ENCODE measurements at regions of chr9 and their contacts with region 1.

Region 1: GRCh38 chr9:79817438-79818004 is 245.8 kb downstream of the TLE4 start:
- DNase-seq: peak; percentile 22
- H3K4me3 Mint-ChIP-seq: no peak overlapping the region
- H3K27ac Mint-ChIP-seq: no peak overlapping the region
- H3K4me1 Mint-ChIP-seq: peaks cover 43% of the 10 kb centered on the region
- H3K27me3 Mint-ChIP-seq: no peaks in the 10 kb centered on the region

Region 2: DNA sequence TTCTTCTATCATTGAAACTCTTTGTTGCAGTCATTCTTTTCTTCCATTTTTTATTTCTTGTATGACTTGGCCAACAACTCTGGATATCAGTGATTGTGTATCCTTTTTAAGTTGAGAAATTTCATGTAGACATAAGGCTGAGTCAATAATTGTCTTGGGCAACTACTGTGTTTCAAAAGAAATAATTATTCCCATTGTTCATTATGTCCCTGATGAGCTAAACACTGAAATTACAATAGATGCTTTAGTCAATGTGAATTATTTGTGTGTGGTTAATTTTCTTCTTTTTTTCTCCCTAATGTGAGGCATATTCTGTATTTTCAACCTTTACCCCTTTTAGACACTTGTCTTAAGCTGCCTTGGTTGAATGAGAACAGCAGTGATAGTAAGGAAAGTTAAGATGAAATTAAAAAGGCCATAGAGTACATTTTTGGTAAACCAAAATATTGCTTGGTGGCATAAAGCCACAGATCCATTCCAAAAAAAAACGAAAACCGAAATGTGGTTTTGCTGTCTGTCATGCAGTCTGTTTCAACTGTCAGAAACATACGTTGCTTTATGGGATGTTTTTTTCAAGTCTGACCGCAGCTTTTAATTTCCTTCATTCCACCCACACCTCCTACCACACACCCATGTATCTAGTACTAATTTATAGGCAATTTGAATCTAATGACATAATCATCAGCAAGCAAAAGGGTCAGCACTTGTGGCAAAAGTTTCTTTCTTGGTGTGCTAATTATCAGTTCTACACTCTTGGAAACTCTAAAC is 224.6 kb before region 1 on chr9:
- intact Hi-C with region 1: loop called (anchors 1 kb)
- DNase-seq: no peak
- H3K4me3 Mint-ChIP-seq: no peak overlapping the region
- H3K27ac Mint-ChIP-seq: peak overlapping the region; percentile 30
- H3K4me1 Mint-ChIP-seq: peaks cover 62% of the 10 kb centered on the region
- H3K27me3 Mint-ChIP-seq: peaks cover 11% of the 10 kb centered on the region

Region 3: GRCh38 chr9:79623799-79624721 is 193.5 kb before region 1 on chr9:
- intact Hi-C with region 1: loop called (anchors 5 kb)
- DNase-seq: no peak
- H3K4me3 Mint-ChIP-seq: peak overlapping the region; percentile 57
- H3K27ac Mint-ChIP-seq: peak overlapping the region; percentile 81
- H3K4me1 Mint-ChIP-seq: peaks cover 30% of the 10 kb centered on the region
- H3K27me3 Mint-ChIP-seq: no peaks in the 10 kb centered on the region

Region 4: GRCh38 chr9:79694676-79695400 is 122.7 kb before region 1 on chr9:
- intact Hi-C with region 1: loop called (anchors 5 kb)
- DNase-seq: no peak
- H3K4me3 Mint-ChIP-seq: no peak overlapping the region
- H3K27ac Mint-ChIP-seq: no peak overlapping the region
- H3K4me1 Mint-ChIP-seq: peaks cover 31% of the 10 kb centered on the region
- H3K27me3 Mint-ChIP-seq: no peaks in the 10 kb centered on the region

Region 5: DNA sequence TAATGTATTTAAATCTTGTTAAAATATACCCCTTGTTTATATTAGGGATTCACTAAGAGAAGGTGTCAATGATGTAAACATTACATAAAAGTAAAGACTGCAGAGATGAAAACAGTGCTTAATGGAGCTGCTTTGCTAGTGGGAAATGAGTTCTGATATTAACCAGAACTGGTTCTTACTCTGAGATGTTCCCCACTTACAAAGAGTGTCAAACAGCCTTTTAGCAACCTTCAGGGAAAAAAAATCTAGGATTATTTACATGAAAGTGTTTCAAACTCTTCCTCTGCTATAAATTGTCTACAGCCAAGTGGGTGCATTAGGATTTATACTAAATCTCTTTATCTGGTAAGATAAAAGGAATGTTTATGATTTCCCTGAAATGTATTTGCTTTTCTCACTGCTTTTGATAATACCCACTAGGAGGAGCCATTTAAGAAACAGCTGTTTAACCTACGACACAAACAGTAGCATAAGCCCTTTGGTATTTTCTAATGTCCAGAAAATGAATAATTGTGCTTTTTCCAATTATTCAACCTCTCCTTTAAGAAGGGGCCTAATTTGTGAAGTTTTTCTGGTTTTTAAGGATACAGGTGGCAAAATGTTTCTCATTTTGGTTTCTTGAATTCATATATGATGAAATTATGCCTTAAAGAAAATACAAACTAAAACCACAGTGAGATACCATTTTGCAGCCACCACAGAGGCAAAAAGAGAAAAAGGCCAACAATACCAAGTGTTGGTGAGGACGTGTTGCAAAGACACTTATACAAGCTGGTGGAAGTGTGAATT is 59.4 kb before region 1 on chr9:
- intact Hi-C with region 1: loop called (anchors 2 kb)
- DNase-seq: no peak
- H3K4me3 Mint-ChIP-seq: no peak overlapping the region
- H3K27ac Mint-ChIP-seq: no peak overlapping the region
- H3K4me1 Mint-ChIP-seq: peaks cover 21% of the 10 kb centered on the region
- H3K27me3 Mint-ChIP-seq: peaks cover 2% of the 10 kb centered on the region

Region 6: DNA sequence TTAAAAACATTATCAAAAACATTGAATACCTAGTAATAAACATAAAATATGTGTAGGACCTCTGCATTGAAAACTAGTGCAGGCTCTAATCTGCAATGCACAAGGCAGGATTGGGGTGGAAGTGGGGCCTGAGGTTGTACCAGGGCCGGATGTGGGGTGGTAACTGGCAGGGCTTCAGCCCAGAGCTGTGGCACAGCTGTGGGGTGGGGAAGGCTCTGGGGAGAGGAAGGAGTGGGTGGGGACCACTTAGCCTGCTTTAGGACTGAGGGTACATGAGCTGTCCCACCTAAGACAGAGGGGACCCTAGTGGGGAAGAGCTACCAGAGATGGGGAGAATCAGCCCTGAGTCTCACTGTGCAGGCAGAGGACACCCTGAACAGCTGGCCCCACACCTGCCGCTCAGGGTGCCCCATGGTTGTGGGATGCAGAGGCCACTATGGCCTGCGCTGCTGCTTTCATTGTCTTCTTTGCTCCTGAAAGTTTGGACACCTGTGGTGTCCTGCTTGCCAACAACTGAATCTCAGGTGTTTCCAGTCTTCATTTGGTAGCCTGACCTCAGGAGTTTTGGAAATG is 65.6 kb after region 1 on chr9:
- intact Hi-C with region 1: loop called (anchors 10 kb)
- DNase-seq: peak; percentile 25
- H3K4me3 Mint-ChIP-seq: no peak overlapping the region
- H3K27ac Mint-ChIP-seq: no peak overlapping the region
- H3K4me1 Mint-ChIP-seq: peaks cover 40% of the 10 kb centered on the region
- H3K27me3 Mint-ChIP-seq: peaks cover 3% of the 10 kb centered on the region

Region 7: DNA sequence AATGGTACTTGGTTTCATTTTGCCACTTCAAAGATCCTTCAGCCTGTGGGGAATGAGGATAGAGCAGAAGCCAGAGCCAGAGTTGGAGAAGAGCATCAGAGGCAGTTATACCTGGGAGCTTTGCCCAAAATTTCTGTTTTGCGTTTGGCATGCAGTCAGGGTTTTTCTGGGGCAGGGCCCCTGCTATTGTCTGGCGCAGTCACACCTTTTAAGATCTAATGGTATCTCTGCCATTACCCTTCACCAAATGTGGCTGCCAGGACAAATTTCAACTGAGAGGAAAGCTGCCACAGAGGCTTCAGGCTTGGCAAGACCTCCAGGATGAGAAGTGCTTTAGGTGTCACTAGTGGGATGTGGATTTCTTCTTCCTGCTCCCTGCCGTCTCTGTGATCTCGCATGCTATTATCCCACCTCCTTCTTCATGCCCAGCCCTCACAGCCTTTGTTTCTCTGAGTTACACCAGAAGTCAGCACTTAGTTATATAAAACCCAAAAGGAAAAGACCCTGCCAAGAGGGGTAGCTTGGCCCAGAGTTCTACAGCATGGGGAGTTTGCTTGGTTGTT is 111.2 kb after region 1 on chr9:
- intact Hi-C with region 1: no loop called
- DNase-seq: no peak
- H3K4me3 Mint-ChIP-seq: no peak overlapping the region
- H3K27ac Mint-ChIP-seq: no peak overlapping the region
- H3K4me1 Mint-ChIP-seq: no peaks in the 10 kb centered on the region
- H3K27me3 Mint-ChIP-seq: no peaks in the 10 kb centered on the region

Region 8: DNA sequence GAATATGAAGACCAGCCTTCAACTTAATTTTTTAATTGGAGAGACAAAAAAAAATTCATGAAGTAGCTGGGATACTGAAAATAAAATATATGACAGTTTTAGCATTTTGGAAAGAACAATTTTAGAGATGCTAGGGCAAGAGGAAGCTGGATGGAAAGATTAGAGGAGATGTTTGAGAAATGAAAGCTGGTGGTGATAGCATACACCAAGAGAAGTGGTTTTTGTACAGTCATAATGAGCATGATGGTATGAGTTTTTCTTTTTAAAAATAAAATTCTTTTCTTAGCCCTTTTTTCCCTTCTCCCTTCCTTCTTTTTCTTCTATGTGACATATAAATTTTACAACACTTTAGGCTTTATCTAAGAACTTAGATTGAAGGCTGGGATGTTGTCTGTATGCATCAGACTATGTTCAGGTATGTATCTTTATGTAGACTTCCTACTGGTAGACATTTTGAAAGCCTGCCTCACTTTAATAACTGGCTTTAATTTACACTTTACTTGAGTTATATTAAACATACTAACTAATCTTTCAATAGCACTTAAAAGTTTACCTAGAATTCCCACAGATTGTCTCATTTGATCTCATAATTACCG is 276.8 kb after region 1 on chr9:
- intact Hi-C with region 1: loop called (anchors 5 kb)
- DNase-seq: no peak
- H3K4me3 Mint-ChIP-seq: no peak overlapping the region
- H3K27ac Mint-ChIP-seq: no peak overlapping the region
- H3K4me1 Mint-ChIP-seq: peaks cover 4% of the 10 kb centered on the region
- H3K27me3 Mint-ChIP-seq: no peaks in the 10 kb centered on the region